ENCODE measurements at regions of chr5 and their contacts with region 1.

Region 1: GRCh38 chr5:151659001-151659754 is 27.5 kb downstream of the SPARC start:
- DNase-seq: peak; percentile 84 to 91
- H3K4me3 ChIP-seq: no peak overlapping the region
- H3K4me3 Mint-ChIP-seq: no peak overlapping the region
- H3K27ac Mint-ChIP-seq: no peak overlapping the region
- H3K4me1 ChIP-seq: peaks cover 7% of the 10 kb centered on the region; the same call in 1 of the 2 replicates
- H3K4me1 Mint-ChIP-seq: no peaks in the 10 kb centered on the region
- H3K27me3 ChIP-seq: no peaks in the 10 kb centered on the region
- H3K27me3 Mint-ChIP-seq: no peaks in the 10 kb centered on the region
- CTCF ChIP-seq: peak; percentile 83 to 90

Region 2: GRCh38 chr5:151270599-151270998 is 388.6 kb before region 1 on chr5:
- CTCF ChIA-PET with region 1: no interaction called
- POLR2A ChIA-PET with region 1: no interaction called
- intact Hi-C with region 1: no loop called
- DNase-seq: no peak
- H3K4me3 ChIP-seq: no peak overlapping the region
- H3K4me3 Mint-ChIP-seq: no peak overlapping the region
- H3K27ac Mint-ChIP-seq: no peak overlapping the region
- H3K4me1 ChIP-seq: peaks cover 21% of the 10 kb centered on the region
- H3K4me1 Mint-ChIP-seq: peaks cover 7% of the 10 kb centered on the region
- H3K27me3 ChIP-seq: no peaks in the 10 kb centered on the region
- H3K27me3 Mint-ChIP-seq: no peaks in the 10 kb centered on the region
- CTCF ChIP-seq: no peak

Region 3: GRCh38 chr5:151670953-151671636 is 11.9 kb after region 1 on chr5:
- CTCF ChIA-PET with region 1: interaction called, 8 read pairs
- POLR2A ChIA-PET with region 1: interaction called, 3 read pairs
- intact Hi-C with region 1: loop called (anchors 1 kb)
- DNase-seq: no peak
- H3K4me3 ChIP-seq: no peak overlapping the region
- H3K4me3 Mint-ChIP-seq: no peak overlapping the region
- H3K27ac Mint-ChIP-seq: peak overlapping the region; percentile 65
- H3K4me1 ChIP-seq: peaks cover 56% of the 10 kb centered on the region
- H3K4me1 Mint-ChIP-seq: peaks cover 33% of the 10 kb centered on the region
- H3K27me3 ChIP-seq: no peaks in the 10 kb centered on the region
- H3K27me3 Mint-ChIP-seq: no peaks in the 10 kb centered on the region
- CTCF ChIP-seq: no peak

Region 4: GRCh38 chr5:151684690-151685361 is 25.6 kb after region 1 on chr5:
- CTCF ChIA-PET with region 1: interaction called, 8 read pairs
- POLR2A ChIA-PET with region 1: no interaction called
- intact Hi-C with region 1: loop called (anchors 1 kb)
- DNase-seq: peak; percentile 78 to 81
- H3K4me3 ChIP-seq: no peak overlapping the region
- H3K4me3 Mint-ChIP-seq: peak overlapping the region; percentile 6
- H3K27ac Mint-ChIP-seq: peak overlapping the region; percentile 34
- H3K4me1 ChIP-seq: peaks cover 42% of the 10 kb centered on the region
- H3K4me1 Mint-ChIP-seq: peaks cover 27% of the 10 kb centered on the region
- H3K27me3 ChIP-seq: no peaks in the 10 kb centered on the region
- H3K27me3 Mint-ChIP-seq: no peaks in the 10 kb centered on the region
- CTCF ChIP-seq: no peak

Region 5: DNA sequence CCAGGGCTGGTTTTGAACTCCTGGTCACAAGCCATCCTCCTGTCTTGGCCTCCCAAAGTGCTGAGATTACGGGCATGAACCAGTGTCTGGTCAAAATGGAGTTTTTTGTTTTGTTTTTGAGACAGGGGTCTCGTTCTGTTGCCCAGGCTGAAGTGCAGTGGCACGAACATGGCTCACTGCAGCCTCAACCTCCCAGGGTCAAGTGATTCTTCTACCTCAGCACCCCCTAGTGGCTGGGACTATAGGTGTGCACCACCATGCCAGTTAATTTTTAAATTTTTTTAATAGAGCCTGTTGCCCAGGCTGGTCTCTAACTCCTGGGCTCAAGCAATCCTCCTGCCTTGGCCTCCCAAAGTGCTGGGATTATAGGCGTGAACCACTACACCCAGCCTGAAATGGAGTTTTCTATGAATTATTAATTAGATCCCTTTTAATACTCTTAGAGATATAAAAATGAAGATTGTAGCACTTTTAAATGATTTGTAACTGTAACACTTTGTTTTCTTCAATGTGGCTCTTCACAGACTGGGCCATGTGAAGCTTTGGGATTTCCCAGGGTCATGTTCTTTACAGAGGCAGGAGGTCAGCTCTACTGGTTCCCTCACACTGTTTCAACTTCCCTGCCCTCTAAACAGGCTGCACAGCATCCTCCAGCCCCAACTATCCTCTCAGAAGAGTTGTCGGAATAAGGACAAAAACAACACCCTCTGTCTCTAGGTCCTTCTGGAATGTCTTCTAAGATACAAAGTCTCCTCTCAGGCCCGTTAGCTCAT is 60.2 kb after region 1 on chr5:
- CTCF ChIA-PET with region 1: interaction called, 10 read pairs
- POLR2A ChIA-PET with region 1: no interaction called
- intact Hi-C with region 1: loop called (anchors 1 kb)
- DNase-seq: peak in 1 of 2 experiments; percentile 42
- H3K4me3 ChIP-seq: no peak overlapping the region
- H3K4me3 Mint-ChIP-seq: no peak overlapping the region
- H3K27ac Mint-ChIP-seq: no peak overlapping the region
- H3K4me1 ChIP-seq: no peaks in the 10 kb centered on the region
- H3K4me1 Mint-ChIP-seq: no peaks in the 10 kb centered on the region
- H3K27me3 ChIP-seq: no peaks in the 10 kb centered on the region
- H3K27me3 Mint-ChIP-seq: no peaks in the 10 kb centered on the region
- CTCF ChIP-seq: peak; percentile 30 to 38

Region 6: GRCh38 chr5:151740336-151740942 is 81.3 kb after region 1 on chr5:
- CTCF ChIA-PET with region 1: interaction called, 48 read pairs
- POLR2A ChIA-PET with region 1: interaction called, 3 read pairs
- intact Hi-C with region 1: loop called (anchors 1 kb)
- DNase-seq: peak; percentile 62 to 70
- H3K4me3 ChIP-seq: no peak overlapping the region
- H3K4me3 Mint-ChIP-seq: no peak overlapping the region
- H3K27ac Mint-ChIP-seq: peak overlapping the region; percentile 51
- H3K4me1 ChIP-seq: peaks cover 15% of the 10 kb centered on the region
- H3K4me1 Mint-ChIP-seq: peaks cover 16% of the 10 kb centered on the region
- H3K27me3 ChIP-seq: no peaks in the 10 kb centered on the region
- H3K27me3 Mint-ChIP-seq: no peaks in the 10 kb centered on the region
- CTCF ChIP-seq: peak; percentile 82 to 94

Region 7: GRCh38 chr5:151771259-151772028 is 112.3 kb after region 1 on chr5 and contains the start of gene G3BP1:
- CTCF ChIA-PET with region 1: interaction called, 12 read pairs
- POLR2A ChIA-PET with region 1: interaction called, 3 read pairs
- intact Hi-C with region 1: loop called (anchors 1 kb)
- DNase-seq: peak; percentile 100
- H3K4me3 ChIP-seq: peak within 1 kb of the TSS; percentile 98
- H3K4me3 Mint-ChIP-seq: no peak within 1 kb of the TSS
- H3K27ac Mint-ChIP-seq: no peak within 1 kb of the TSS
- H3K4me1 ChIP-seq: no peaks in the 10 kb centered on the region; the same call in 1 of the 2 replicates
- H3K4me1 Mint-ChIP-seq: peaks cover 17% of the 10 kb centered on the region
- H3K27me3 ChIP-seq: no peaks in the 10 kb centered on the region
- H3K27me3 Mint-ChIP-seq: no peaks in the 10 kb centered on the region
- CTCF ChIP-seq: peak; percentile 4 to 60
- total RNA-seq, gene G3BP1: 291 and 329 TPM in 2 replicates

Region 8: DNA sequence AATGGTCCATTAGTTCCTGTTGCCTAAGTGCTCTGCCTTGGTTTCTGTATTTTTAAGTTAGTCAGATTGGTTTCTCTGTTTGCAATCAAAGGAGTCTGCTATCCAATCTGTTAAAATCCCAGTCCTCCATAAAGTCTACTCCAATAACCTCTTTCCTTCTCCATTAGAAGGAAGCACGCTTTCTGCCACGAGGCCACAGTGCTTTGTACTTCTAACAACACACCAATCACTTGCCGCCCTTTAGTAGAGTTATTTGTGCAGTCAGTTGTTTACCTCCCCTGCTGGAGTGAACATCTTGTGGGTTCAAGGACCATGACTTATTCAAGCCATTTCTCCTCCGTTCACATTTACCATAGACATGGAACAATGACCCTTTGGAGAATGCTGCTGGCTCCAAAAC is 196.5 kb after region 1 on chr5:
- CTCF ChIA-PET with region 1: no interaction called
- POLR2A ChIA-PET with region 1: no interaction called
- intact Hi-C with region 1: no loop called
- DNase-seq: no peak
- H3K4me3 ChIP-seq: no peak overlapping the region
- H3K4me3 Mint-ChIP-seq: no peak overlapping the region
- H3K27ac Mint-ChIP-seq: no peak overlapping the region
- H3K4me1 ChIP-seq: no peaks in the 10 kb centered on the region
- H3K4me1 Mint-ChIP-seq: no peaks in the 10 kb centered on the region
- H3K27me3 ChIP-seq: no peaks in the 10 kb centered on the region
- H3K27me3 Mint-ChIP-seq: no peaks in the 10 kb centered on the region
- CTCF ChIP-seq: no peak